ENCODE measurements at regions of chr13 and their contacts with region 1.

Region 1: GRCh38 chr13:41222259-41222852 is 28.0 kb upstream of the KBTBD7 start:
- DNase-seq: no peak
- ATAC-seq: peak; percentile 85
- H3K4me3 ChIP-seq: no peak overlapping the region
- H3K27ac ChIP-seq: no peak overlapping the region
- H3K4me1 ChIP-seq: no peaks in the 10 kb centered on the region
- H3K27me3 ChIP-seq: no peaks in the 10 kb centered on the region

Region 2: DNA sequence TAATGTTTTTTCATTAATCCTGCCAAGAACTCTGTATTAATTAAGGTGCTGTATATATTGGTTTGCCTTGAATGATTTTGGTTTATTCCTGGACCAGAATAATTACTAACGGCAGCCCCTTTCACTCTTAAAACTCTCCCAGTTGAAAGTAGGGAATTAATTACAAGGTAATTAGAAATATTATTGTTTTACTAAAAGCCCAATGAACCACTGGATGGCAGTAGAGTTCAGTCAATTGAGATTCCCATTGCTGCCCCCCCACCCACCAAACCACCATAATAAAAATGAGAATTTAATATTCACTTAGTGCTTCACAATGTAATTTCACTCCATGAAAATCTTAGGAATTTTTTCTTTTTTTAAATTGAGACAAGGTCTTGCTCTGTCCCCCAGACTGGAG is 147.3 kb before region 1 on chr13:
- intact Hi-C with region 1: loop called (anchors 5 kb)
- DNase-seq: no peak
- ATAC-seq: no peak
- H3K4me3 ChIP-seq: no peak overlapping the region
- H3K27ac ChIP-seq: no peak overlapping the region
- H3K4me1 ChIP-seq: no peaks in the 10 kb centered on the region
- H3K27me3 ChIP-seq: no peaks in the 10 kb centered on the region

Region 3: GRCh38 chr13:41122838-41123237 is 99.5 kb before region 1 on chr13:
- intact Hi-C with region 1: no loop called
- DNase-seq: no peak
- ATAC-seq: no peak
- H3K4me3 ChIP-seq: no peak overlapping the region
- H3K27ac ChIP-seq: no peak overlapping the region
- H3K4me1 ChIP-seq: no peaks in the 10 kb centered on the region
- H3K27me3 ChIP-seq: no peaks in the 10 kb centered on the region

Region 4: GRCh38 chr13:41694545-41695301 is 472.4 kb after region 1 on chr13:
- intact Hi-C with region 1: no loop called
- DNase-seq: peak; percentile 80 to 81
- ATAC-seq: peak; percentile 91
- H3K4me3 ChIP-seq: no peak overlapping the region
- H3K27ac ChIP-seq: no peak overlapping the region
- H3K4me1 ChIP-seq: peaks cover 3 to 5% of the 10 kb centered on the region in 2 donors
- H3K27me3 ChIP-seq: no peaks in the 10 kb centered on the region

Region 5: GRCh38 chr13:42056146-42056545 is 833.8 kb after region 1 on chr13:
- intact Hi-C with region 1: no loop called
- DNase-seq: no peak
- ATAC-seq: no peak
- H3K4me3 ChIP-seq: no peak overlapping the region
- H3K27ac ChIP-seq: no peak overlapping the region
- H3K4me1 ChIP-seq: no peaks in the 10 kb centered on the region
- H3K27me3 ChIP-seq: no peaks in the 10 kb centered on the region